ENCODE measurements at regions of chr20 and their contacts with region 1.

Region 1: GRCh38 chr20:43666376-43667328 is at the start of gene MYBL2:
- DNase-seq: peak; percentile 84
- H3K4me3 ChIP-seq: peak within 1 kb of the TSS; percentile 69
- H3K27ac ChIP-seq: peak within 1 kb of the TSS; percentile 85
- H3K4me1 ChIP-seq: peaks cover 12% of the 10 kb centered on the region
- H3K27me3 ChIP-seq: no peaks in the 10 kb centered on the region
- CTCF ChIP-seq: no peak
- total RNA-seq, gene MYBL2: 256 TPM in 2 replicates

Region 2: DNA sequence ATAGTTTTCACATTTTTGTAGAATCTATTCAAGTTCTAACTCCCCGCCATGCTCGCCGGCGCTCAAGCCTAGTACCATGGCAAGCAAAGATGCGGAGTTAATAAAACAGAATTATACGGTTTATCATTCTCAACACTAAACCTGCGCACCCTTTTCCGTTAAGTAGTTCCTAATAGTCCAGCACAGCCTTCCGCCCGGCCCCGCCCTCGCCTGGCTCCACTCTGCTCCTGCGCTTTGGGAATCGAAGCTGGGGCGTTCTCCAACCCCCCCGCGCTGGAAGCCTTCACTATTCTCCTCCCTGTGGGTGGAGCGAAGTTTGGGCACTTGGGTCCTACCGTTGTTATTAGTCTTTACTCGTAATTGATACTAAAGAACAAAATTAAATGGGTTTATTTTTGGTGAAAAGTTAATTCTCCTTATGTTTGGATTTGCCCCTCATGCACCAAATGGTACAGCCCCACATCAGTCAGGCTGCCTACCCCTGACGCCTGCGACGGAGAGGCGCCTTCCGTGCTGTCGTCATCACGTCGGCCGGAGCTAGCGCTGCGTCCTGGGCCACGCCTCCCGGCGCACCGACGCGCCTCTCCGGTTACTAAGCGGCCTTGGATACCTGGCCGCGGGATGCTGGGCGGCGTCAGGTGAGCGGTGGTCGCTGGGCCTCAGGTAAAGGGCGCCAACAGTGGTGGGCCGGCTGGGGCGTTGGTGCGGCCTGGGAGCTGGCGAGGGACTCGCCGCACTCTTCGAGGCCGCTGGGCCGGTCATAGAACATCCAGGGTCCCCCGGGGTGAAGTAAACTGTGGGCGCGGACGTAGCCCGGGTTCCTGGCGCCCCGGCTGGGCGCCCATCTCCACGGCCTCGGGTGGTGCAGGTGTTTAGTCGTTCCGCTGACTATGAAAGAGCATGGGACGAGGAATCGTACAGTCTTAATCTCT is 76.0 kb before region 1 on chr20 and contains the start of gene IFT52:
- CTCF ChIA-PET with region 1: no interaction called
- POLR2A ChIA-PET with region 1: interaction called, 20 read pairs
- intact Hi-C with region 1: no loop called
- DNase-seq: peak; percentile 95
- H3K4me3 ChIP-seq: peak within 1 kb of the TSS; percentile 88
- H3K27ac ChIP-seq: peak within 1 kb of the TSS; percentile 97
- H3K4me1 ChIP-seq: peaks cover 6% of the 10 kb centered on the region
- H3K27me3 ChIP-seq: no peaks in the 10 kb centered on the region
- CTCF ChIP-seq: no peak
- total RNA-seq, gene IFT52: 44.3 and 49.6 TPM in 2 replicates

Region 3: GRCh38 chr20:43736588-43737158 is 70.0 kb after region 1 on chr20:
- CTCF ChIA-PET with region 1: no interaction called
- POLR2A ChIA-PET with region 1: no interaction called
- intact Hi-C with region 1: loop called (anchors 10 kb)
- DNase-seq: peak; percentile 21
- H3K4me3 ChIP-seq: no peak overlapping the region
- H3K27ac ChIP-seq: no peak overlapping the region
- H3K4me1 ChIP-seq: no peaks in the 10 kb centered on the region
- H3K27me3 ChIP-seq: no peaks in the 10 kb centered on the region
- CTCF ChIP-seq: no peak